T-cell (primary cell): ENCODE measurements at regions of chr5 and their contacts with region 1.

Region 1: DNA sequence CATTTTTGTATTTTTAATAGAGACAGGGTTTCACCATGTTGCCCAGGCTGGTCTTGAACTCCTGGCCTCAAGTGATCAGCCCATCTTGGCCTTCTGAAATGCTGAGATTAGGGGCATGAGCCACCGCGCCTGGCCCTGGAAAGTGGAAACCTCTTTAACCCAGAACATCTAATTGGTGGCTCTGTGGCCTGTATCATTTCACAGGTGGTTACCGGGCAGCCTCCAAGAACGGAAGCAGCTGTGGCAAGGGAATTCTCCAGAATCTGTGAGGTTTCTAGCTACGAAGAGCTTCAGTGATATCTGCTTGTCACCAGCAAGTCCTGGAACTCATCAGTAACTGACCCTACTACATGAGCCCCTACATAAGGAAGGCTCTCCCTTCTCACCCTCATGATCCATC is 194.9 kb downstream of the DCP2 start:
- DNase-seq: no peak
- ATAC-seq: no peak
- H3K4me3 ChIP-seq: no peak overlapping the region
- H3K4me3 Mint-ChIP-seq: no peak overlapping the region
- H3K27ac ChIP-seq: no peak overlapping the region
- H3K27ac Mint-ChIP-seq: no peak overlapping the region
- H3K4me1 ChIP-seq: no peaks in the 10 kb centered on the region
- H3K4me1 Mint-ChIP-seq: peaks cover 0 to 7% (median 0%) of the 10 kb centered on the region in 3 donors
- H3K27me3 ChIP-seq: no peaks in the 10 kb centered on the region
- H3K27me3 Mint-ChIP-seq: peaks cover 4 to 13% of the 10 kb centered on the region in 2 donors

Region 2: DNA sequence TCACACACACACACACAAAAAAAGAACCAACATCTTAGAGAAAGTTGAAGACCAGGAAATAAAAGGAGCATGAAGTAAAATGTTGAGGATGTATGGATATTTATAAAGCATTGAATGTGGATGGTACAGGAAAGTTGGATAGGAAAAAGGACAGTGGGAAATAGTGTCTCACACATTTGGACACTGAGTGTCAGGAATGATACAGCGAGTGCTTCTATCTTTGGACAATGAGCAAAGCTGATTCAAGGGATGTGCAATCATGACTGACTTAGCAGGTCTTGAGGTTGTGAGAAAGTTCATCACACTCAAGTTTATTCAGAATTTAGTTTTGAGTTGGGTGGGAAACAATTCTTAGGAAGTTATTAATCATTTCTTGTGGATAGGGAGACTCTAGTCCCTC is 360.5 kb before region 1 on chr5:
- CTCF ChIA-PET with region 1: interaction called in 1 of 2 experiments, 14 read pairs
- POLR2A ChIA-PET with region 1: no interaction called
- DNase-seq: no peak
- ATAC-seq: no peak
- H3K4me3 ChIP-seq: no peak overlapping the region
- H3K4me3 Mint-ChIP-seq: no peak overlapping the region
- H3K27ac ChIP-seq: no peak overlapping the region
- H3K27ac Mint-ChIP-seq: no peak overlapping the region
- H3K4me1 ChIP-seq: no peaks in the 10 kb centered on the region
- H3K4me1 Mint-ChIP-seq: peaks cover 0 to 6% (median 0%) of the 10 kb centered on the region in 3 donors
- H3K27me3 ChIP-seq: no peaks in the 10 kb centered on the region
- H3K27me3 Mint-ChIP-seq: no peaks in the 10 kb centered on the region

Region 3: GRCh38 chr5:113147101-113147508 is 24.4 kb before region 1 on chr5:
- CTCF ChIA-PET with region 1: no interaction called
- POLR2A ChIA-PET with region 1: no interaction called
- DNase-seq: no peak
- ATAC-seq: no peak
- H3K4me3 ChIP-seq: no peak overlapping the region
- H3K4me3 Mint-ChIP-seq: no peak overlapping the region
- H3K27ac ChIP-seq: no peak overlapping the region
- H3K27ac Mint-ChIP-seq: no peak overlapping the region
- H3K4me1 ChIP-seq: no peaks in the 10 kb centered on the region
- H3K4me1 Mint-ChIP-seq: peaks cover 0 to 1% (median 0%) of the 10 kb centered on the region in 3 donors
- H3K27me3 ChIP-seq: no peaks in the 10 kb centered on the region
- H3K27me3 Mint-ChIP-seq: peaks cover 0 to 4% of the 10 kb centered on the region in 2 donors